ENCODE measurements at regions of chr20 and their contacts with region 1.

Region 1: GRCh38 chr20:23606652-23607049 is 934 bp upstream of the CST9 start:
- DNase-seq: no peak
- H3K4me3 ChIP-seq: no peak overlapping the region
- H3K27me3 ChIP-seq: peaks cover 5% of the 10 kb centered on the region; the same call in 1 of the 2 replicates
- CTCF ChIP-seq: peak; percentile 97

Region 2: GRCh38 chr20:23435626-23436539 is 170.8 kb before region 1 on chr20:
- CTCF ChIA-PET with region 1: interaction called, 112 read pairs
- POLR2A ChIA-PET with region 1: no interaction called
- DNase-seq: no peak
- H3K4me3 ChIP-seq: no peak overlapping the region
- H3K27me3 ChIP-seq: no peaks in the 10 kb centered on the region; the same call in 1 of the 2 replicates
- CTCF ChIP-seq: no peak

Region 3: GRCh38 chr20:23441850-23442313 is 164.8 kb before region 1 on chr20:
- CTCF ChIA-PET with region 1: interaction called, 112 read pairs
- POLR2A ChIA-PET with region 1: no interaction called
- DNase-seq: peak; percentile 19
- H3K4me3 ChIP-seq: no peak overlapping the region
- H3K27me3 ChIP-seq: no peaks in the 10 kb centered on the region; the same call in 1 of the 2 replicates
- CTCF ChIP-seq: peak; percentile 92

Region 4: GRCh38 chr20:23574977-23575376 is 31.7 kb before region 1 on chr20:
- CTCF ChIA-PET with region 1: no interaction called
- POLR2A ChIA-PET with region 1: no interaction called
- DNase-seq: no peak
- H3K4me3 ChIP-seq: no peak overlapping the region
- H3K27me3 ChIP-seq: no peaks in the 10 kb centered on the region
- CTCF ChIP-seq: no peak

Region 5: GRCh38 chr20:24256307-24256706 is 649.7 kb after region 1 on chr20:
- CTCF ChIA-PET with region 1: no interaction called
- POLR2A ChIA-PET with region 1: no interaction called
- DNase-seq: no peak
- H3K4me3 ChIP-seq: no peak overlapping the region
- H3K27me3 ChIP-seq: no peaks in the 10 kb centered on the region
- CTCF ChIP-seq: no peak

Measured in BJ (cell line).